ENCODE measurements at regions of chr5 and their contacts with region 1.

Region 1: GRCh38 chr5:38551030-38552017 is 5.1 kb downstream of the LIFR start:
- DNase-seq: no peak
- ATAC-seq: peak in 1 of 2 donors; percentile 24

Region 2: GRCh38 chr5:38473008-38473407 is 78.3 kb before region 1 on chr5:
- intact Hi-C with region 1: loop called in 1 of 2 experiments (anchors 5 kb)
- DNase-seq: peak; percentile 71
- ATAC-seq: peak in 1 of 2 donors; percentile 56

Region 3: GRCh38 chr5:38483788-38484398 is 67.4 kb before region 1 on chr5:
- intact Hi-C with region 1: no loop called
- DNase-seq: no peak
- ATAC-seq: no peak

Measured in left cardiac atrium (tissue), 4 donors.